ENCODE measurements at regions of chr1 and their contacts with region 1.

Region 1: GRCh38 chr1:21659099-21659923 is 9.8 kb downstream of the RAP1GAP start:
- DNase-seq: peak; percentile 73
- H3K4me3 ChIP-seq: peak overlapping the region; percentile 33; the same call in 1 of the 2 replicates
- H3K27ac ChIP-seq: no peak overlapping the region
- H3K4me1 ChIP-seq: no peaks in the 10 kb centered on the region
- H3K27me3 ChIP-seq: peaks cover 7% of the 10 kb centered on the region

Region 2: GRCh38 chr1:21378705-21379494 is 280.4 kb before region 1 on chr1:
- in situ Hi-C with region 1: loop called (anchors 10 kb)
- DNase-seq: no peak
- H3K4me3 ChIP-seq: no peak overlapping the region
- H3K27ac ChIP-seq: no peak overlapping the region
- H3K4me1 ChIP-seq: no peaks in the 10 kb centered on the region
- H3K27me3 ChIP-seq: peaks cover 25% of the 10 kb centered on the region

Measured in GM23248 (cell line).